Sigmoid colon (tissue), 7 donors: ENCODE measurements at regions of chr9 and their contacts with region 1.

Region 1: GRCh38 chr9:32384364-32385151 is at the start of gene ACO1:
- DNase-seq: peak; percentile 94
- H3K4me3 ChIP-seq: peak within 1 kb of the TSS; percentile 58 to 84 (median 77)
- H3K27ac ChIP-seq: peak within 1 kb of the TSS; percentile 89 to 95 (median 92)
- H3K4me1 ChIP-seq: peaks cover 0 to 43% (median 35%) of the 10 kb centered on the region in 4 donors
- H3K27me3 ChIP-seq: no peaks in the 10 kb centered on the region
- CTCF ChIP-seq: no peak
- EP300 ChIP-seq: no peak
- POLR2A ChIP-seq: peak; percentile 64 to 72
- total RNA-seq, gene ACO1: 37.2 to 54.2 (median 40.0) TPM

Region 2: GRCh38 chr9:32426278-32426939 is 41.9 kb after region 1 on chr9:
- intact Hi-C with region 1: loop called (anchors 2 kb)
- DNase-seq: no peak
- H3K4me3 ChIP-seq: no peak overlapping the region
- H3K27ac ChIP-seq: peak overlapping the region in 2 of 4 donors; percentile 36 to 38
- H3K4me1 ChIP-seq: peaks cover 0 to 14% (median 0%) of the 10 kb centered on the region in 4 donors
- H3K27me3 ChIP-seq: no peaks in the 10 kb centered on the region
- CTCF ChIP-seq: no peak
- EP300 ChIP-seq: no peak
- POLR2A ChIP-seq: no peak

Region 3: GRCh38 chr9:32456564-32456963 is 72.0 kb after region 1 on chr9:
- intact Hi-C with region 1: loop called (anchors 5 kb)
- DNase-seq: no peak
- H3K4me3 ChIP-seq: no peak overlapping the region
- H3K27ac ChIP-seq: no peak overlapping the region
- H3K4me1 ChIP-seq: peaks cover 0 to 4% (median 0%) of the 10 kb centered on the region in 4 donors
- H3K27me3 ChIP-seq: no peaks in the 10 kb centered on the region
- CTCF ChIP-seq: no peak
- EP300 ChIP-seq: no peak
- POLR2A ChIP-seq: no peak

Region 4: DNA sequence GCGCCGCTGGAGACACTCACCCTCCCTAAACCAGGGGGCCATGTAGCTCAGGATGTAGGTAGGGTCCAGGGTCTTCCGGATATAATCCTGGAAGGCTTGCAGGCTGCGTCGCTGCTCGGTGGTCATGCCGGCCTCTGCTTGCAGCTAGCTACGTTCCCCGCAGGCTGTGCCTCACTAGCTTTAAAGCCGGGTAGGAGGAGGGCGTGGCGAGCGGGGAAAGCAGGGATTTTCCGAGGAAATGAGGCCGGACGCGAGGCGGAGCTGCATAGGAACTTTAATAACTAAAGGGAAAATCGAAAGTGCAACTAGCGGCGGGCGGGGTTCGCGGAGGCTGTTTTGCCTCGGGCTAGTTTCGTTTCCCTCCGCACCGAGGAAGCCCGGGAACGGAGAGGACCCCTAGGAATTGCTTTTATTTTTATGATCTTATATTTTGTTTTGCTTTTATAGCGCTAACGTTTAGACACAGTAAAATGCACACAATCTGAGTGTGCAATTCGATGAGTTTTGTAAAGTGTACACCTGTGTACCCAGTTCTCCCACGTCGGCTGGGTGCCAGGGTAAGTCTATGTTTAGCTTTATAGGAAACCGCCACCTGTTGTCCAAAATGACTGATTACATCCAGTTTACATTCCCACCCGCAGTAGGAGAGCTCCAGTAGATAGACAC is 141.6 kb after region 1 on chr9 and contains the start of gene RIGI:
- intact Hi-C with region 1: loop called (anchors 1 kb)
- DNase-seq: peak; percentile 96
- H3K4me3 ChIP-seq: peak within 1 kb of the TSS; percentile 55 to 69 (median 62)
- H3K27ac ChIP-seq: peak within 1 kb of the TSS; percentile 83 to 91 (median 86)
- H3K4me1 ChIP-seq: peaks cover 0 to 33% (median 20%) of the 10 kb centered on the region in 4 donors
- H3K27me3 ChIP-seq: no peaks in the 10 kb centered on the region
- CTCF ChIP-seq: peak in 1 of 4 experiments; percentile 26
- EP300 ChIP-seq: no peak
- POLR2A ChIP-seq: peak; percentile 43 to 60
- total RNA-seq, gene RIGI: 9.4 to 19.6 (median 13.9) TPM